HCT116 (cell line): ENCODE measurements at regions of chr17 and their contacts with region 1.

Region 1: DNA sequence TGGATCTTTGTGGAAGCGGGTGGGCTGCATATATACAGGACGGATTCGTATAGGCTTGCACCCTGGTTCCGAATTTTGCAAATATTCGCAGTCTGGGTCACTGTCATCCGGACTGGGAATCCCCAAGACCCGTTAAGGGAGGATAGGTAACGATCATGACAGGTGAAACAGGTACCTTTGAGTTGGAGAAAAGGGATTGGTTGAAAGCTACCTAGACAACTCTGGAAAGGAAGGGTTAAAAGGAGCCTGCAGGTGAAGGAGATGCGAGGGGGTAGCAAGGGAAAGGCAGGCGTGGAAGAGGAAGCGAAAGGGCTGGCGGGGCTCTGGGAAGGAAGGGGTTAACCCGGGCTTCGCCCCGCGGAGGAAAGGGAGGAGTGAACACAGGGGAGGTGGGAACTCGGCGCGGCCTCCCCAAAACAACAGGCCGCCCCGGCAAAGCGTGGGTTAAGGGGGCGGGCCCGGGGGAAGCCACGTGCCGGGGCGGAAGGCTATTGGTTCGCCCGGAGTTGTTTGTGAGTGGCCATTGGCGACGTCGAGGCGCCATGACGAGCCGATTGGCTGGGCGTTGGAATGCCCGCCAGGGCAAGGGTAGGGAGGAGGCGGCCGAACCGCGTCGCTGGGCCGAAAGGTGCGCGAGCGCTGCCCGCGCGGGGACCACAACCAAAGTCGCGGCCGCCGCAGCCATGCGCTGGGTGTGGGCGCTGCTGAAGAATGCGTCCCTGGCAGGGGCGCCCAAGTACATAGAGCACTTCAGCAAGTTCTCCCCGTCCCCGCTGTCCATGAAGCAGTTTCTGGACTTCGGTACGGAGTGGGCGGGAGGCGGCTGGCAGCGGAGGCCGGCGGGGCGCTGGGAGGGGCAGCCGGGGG is at the start of gene PDK2:
- DNase-seq: peak; percentile 96
- ATAC-seq: peak; percentile 92
- H3K4me3 ChIP-seq: peak within 1 kb of the TSS; percentile 84 to 96
- H3K27ac ChIP-seq: peak within 1 kb of the TSS; percentile 64
- H3K4me1 ChIP-seq: peaks cover 14 to 37% of the 10 kb centered on the region in 2 experiments
- H3K27me3 ChIP-seq: no peaks in the 10 kb centered on the region
- CTCF ChIP-seq: no peak
- POLR2A ChIP-seq: no peak
- RAD21 ChIP-seq: no peak
- total RNA-seq, gene PDK2: 39.1 TPM

Region 2: DNA sequence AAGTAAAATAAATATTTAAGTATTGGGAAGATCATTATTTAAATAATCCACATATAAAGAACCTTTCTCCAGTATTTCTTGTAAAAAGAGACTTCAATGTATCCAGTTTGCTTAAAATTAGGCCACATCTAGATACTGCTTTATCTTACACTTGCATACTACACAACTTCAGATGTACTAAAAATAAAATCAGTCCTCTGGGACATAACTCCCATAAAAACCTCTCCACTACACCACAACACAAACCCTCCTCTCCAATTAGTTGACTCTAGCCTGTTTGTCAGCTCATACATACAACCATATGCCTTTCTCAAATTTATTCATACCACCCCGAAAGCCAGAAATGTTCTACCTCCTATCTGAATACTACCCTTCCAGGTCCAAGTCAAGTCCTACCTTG is 438.7 kb before region 1 on chr17:
- CTCF ChIA-PET with region 1: no interaction called
- POLR2A ChIA-PET with region 1: no interaction called
- RAD21 ChIA-PET with region 1: no interaction called
- intact Hi-C with region 1: no loop called
- DNase-seq: no peak
- ATAC-seq: no peak
- H3K4me3 ChIP-seq: no peak overlapping the region
- H3K27ac ChIP-seq: no peak overlapping the region
- H3K4me1 ChIP-seq: no peaks in the 10 kb centered on the region
- H3K27me3 ChIP-seq: no peaks in the 10 kb centered on the region
- CTCF ChIP-seq: no peak
- POLR2A ChIP-seq: no peak
- RAD21 ChIP-seq: no peak

Region 3: GRCh38 chr17:50035421-50035879 is 59.5 kb before region 1 on chr17:
- CTCF ChIA-PET with region 1: interaction called, 12 read pairs
- POLR2A ChIA-PET with region 1: interaction called, 3 read pairs
- RAD21 ChIA-PET with region 1: interaction called in 1 of 2 experiments, 4 read pairs
- intact Hi-C with region 1: no loop called
- DNase-seq: no peak
- ATAC-seq: peak; percentile 95
- H3K4me3 ChIP-seq: no peak overlapping the region
- H3K27ac ChIP-seq: peak overlapping the region; percentile 13; the same call in 1 of the 2 replicates
- H3K4me1 ChIP-seq: peaks cover 22 to 45% of the 10 kb centered on the region in 2 experiments
- H3K27me3 ChIP-seq: no peaks in the 10 kb centered on the region
- CTCF ChIP-seq: peak in 2 of 3 experiments; percentile 38 to 45; a peak in 4 of 6 replicates
- POLR2A ChIP-seq: no peak
- RAD21 ChIP-seq: no peak

Region 4: DNA sequence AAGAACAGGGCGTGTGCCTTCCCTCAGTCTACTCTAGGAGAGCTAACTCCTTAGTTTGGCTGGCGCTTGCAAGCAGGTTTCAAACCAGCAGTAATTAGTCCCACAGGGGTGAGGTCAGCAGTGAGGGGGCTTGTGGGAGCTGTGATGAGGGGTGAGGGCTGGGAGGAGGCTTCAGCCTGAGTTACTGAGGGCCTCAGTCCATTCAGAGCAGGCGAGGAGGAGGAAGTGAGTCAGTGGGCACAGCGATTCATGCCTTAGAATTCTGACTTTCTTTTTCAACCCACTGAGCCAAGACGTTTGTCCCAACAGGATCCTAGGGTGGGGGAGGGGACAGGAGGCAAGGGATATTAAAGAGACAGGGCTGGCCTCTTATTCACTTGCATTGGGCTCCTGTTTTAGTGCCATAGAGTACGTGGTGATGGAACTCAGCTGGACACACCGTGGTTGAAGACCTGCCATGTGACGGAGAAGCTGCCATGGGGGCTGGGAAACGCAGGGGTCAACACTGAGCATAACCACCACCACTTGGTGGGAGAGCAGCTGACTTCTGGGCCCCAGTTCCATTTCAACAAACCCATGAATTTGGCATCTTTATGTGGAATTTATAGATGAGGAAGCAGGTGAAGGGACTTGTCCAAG is 47.4 kb before region 1 on chr17:
- CTCF ChIA-PET with region 1: no interaction called
- POLR2A ChIA-PET with region 1: no interaction called
- RAD21 ChIA-PET with region 1: no interaction called
- intact Hi-C with region 1: no loop called
- DNase-seq: no peak
- ATAC-seq: no peak
- H3K4me3 ChIP-seq: peak overlapping the region in 1 of 2 experiments; percentile 7; a peak in 1 of 4 replicates
- H3K27ac ChIP-seq: peak overlapping the region; percentile 12; the same call in 1 of the 2 replicates
- H3K4me1 ChIP-seq: peaks cover 57 to 77% of the 10 kb centered on the region in 2 experiments
- H3K27me3 ChIP-seq: no peaks in the 10 kb centered on the region
- CTCF ChIP-seq: no peak
- POLR2A ChIP-seq: no peak
- RAD21 ChIP-seq: no peak

Region 5: GRCh38 chr17:50079334-50080095 is 15.5 kb before region 1 on chr17:
- CTCF ChIA-PET with region 1: interaction called, 38 read pairs
- POLR2A ChIA-PET with region 1: interaction called, 4 read pairs
- RAD21 ChIA-PET with region 1: interaction called in 1 of 2 experiments, 4 read pairs
- intact Hi-C with region 1: no loop called
- DNase-seq: peak; percentile 65
- ATAC-seq: peak; percentile 93
- H3K4me3 ChIP-seq: no peak overlapping the region
- H3K27ac ChIP-seq: peak overlapping the region; percentile 42
- H3K4me1 ChIP-seq: peaks cover 6 to 16% of the 10 kb centered on the region in 2 experiments; a peak in 2 of 4 replicates
- H3K27me3 ChIP-seq: no peaks in the 10 kb centered on the region
- CTCF ChIP-seq: peak; percentile 100
- POLR2A ChIP-seq: no peak
- RAD21 ChIP-seq: peak; percentile 83

Region 6: GRCh38 chr17:50151041-50151936 is 56.3 kb after region 1 on chr17:
- CTCF ChIA-PET with region 1: interaction called, 10 read pairs
- POLR2A ChIA-PET with region 1: no interaction called
- RAD21 ChIA-PET with region 1: no interaction called
- intact Hi-C with region 1: no loop called
- DNase-seq: peak; percentile 85
- ATAC-seq: peak; percentile 67
- H3K4me3 ChIP-seq: peak overlapping the region; percentile 76 to 97
- H3K27ac ChIP-seq: peak overlapping the region; percentile 89
- H3K4me1 ChIP-seq: peaks cover 43 to 69% of the 10 kb centered on the region in 2 experiments
- H3K27me3 ChIP-seq: no peaks in the 10 kb centered on the region
- CTCF ChIP-seq: peak in 2 of 3 experiments; percentile 54 to 78; a peak in 4 of 6 replicates
- POLR2A ChIP-seq: peak; percentile 20
- RAD21 ChIP-seq: no peak

Region 7: GRCh38 chr17:50177983-50178834 is 83.2 kb after region 1 on chr17:
- CTCF ChIA-PET with region 1: interaction called, 11 read pairs
- POLR2A ChIA-PET with region 1: no interaction called
- RAD21 ChIA-PET with region 1: no interaction called
- intact Hi-C with region 1: no loop called
- DNase-seq: peak; percentile 90
- ATAC-seq: peak; percentile 94
- H3K4me3 ChIP-seq: peak overlapping the region; percentile 22 to 43
- H3K27ac ChIP-seq: peak overlapping the region; percentile 61
- H3K4me1 ChIP-seq: peaks cover 41 to 56% of the 10 kb centered on the region in 2 experiments
- H3K27me3 ChIP-seq: no peaks in the 10 kb centered on the region
- CTCF ChIP-seq: peak; percentile 80 to 96 (median 82)
- POLR2A ChIP-seq: no peak
- RAD21 ChIP-seq: peak; percentile 72